MCF 10A (cell line): ENCODE measurements at regions of chr5 and their contacts with region 1.

Region 1: DNA sequence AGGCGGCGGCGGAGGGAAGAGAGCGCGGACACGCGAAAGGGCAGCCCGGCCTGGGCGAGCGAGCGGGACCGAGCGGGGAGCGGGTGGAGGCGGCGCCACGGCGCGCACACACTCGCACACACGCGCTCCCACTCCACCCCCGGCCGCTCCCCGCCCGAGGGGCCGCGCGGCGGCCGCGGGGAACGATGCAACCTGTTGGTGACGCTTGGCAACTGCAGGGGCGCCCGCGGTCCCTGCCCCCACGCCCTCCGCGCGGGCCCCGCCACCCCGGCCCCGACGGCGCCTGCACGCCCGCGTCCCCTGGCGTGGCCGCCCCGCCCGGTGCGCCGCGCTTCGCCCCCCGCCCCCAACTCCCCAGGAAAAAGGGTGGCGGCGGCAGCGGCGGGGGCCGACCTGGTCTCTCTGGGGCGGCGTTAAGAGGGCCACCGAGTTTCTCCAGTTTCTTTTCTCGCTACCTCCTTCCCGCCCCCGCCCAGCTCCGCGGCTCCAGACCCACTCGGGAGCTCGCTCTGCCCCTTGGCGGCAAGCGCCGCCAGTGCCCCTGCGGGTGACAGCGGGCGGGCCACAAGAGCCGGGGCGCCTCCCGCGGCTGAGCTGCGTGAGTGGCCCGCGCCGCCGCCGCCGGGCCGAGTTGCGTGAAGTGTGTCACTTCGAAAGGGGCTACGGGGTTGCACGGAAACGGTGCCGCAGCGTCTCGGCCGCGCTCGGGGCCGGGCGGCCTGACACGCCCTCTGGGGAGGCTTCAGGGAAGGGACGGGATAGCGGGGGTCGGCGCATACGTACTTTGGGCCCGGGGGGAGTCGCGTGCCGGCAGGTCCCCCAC is at the start of gene NR3C1:
- DNase-seq: peak; percentile 86
- H3K4me3 Mint-ChIP-seq: peak within 1 kb of the TSS; percentile 98
- H3K27ac Mint-ChIP-seq: peak within 1 kb of the TSS; percentile 99
- H3K4me1 Mint-ChIP-seq: peaks cover 29% of the 10 kb centered on the region
- H3K27me3 Mint-ChIP-seq: no peaks in the 10 kb centered on the region
- CTCF ChIP-seq: peak; percentile 59
- total RNA-seq, gene NR3C1: 92.9 and 113 TPM in 2 replicates

Region 2: DNA sequence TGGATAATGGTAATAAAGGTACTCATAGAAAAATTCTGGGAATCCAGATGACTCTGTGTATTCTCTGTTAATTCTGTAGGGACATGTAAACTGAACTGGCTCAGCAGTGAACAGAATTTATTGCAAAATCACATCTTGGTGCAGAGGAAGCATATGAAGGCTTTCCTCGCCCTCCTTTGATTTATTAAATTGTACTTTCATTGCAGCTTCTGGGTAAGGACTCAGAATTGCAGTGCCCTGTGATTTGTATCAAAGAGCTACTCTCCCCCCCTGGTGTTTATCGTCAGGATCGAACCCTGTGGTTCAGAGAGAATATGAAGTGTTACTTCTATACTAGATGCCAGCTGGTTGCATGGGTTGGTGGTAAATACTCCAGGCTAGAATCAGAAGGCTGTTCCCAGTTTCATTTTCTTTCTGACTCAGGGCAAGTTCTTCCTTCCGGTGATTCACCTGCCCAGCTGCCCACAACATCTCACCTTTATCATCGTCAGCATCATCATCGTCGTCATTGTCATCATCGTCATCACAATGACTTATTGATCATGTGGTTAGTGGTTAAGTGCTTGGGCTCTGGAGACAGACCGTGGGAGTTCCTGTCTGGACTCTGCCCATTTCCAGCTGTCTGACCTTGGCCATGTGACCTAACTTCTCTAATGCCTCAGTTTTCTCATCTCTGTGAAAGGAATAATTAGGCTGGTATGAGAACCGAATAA is 394.8 kb before region 1 on chr5:
- CTCF ChIA-PET with region 1: interaction called, 17 read pairs
- POLR2A ChIA-PET with region 1: interaction called, 41 read pairs
- intact Hi-C with region 1: no loop called
- DNase-seq: peak; percentile 95
- H3K4me3 Mint-ChIP-seq: peak overlapping the region; percentile 43
- H3K27ac Mint-ChIP-seq: peak overlapping the region; percentile 75
- H3K4me1 Mint-ChIP-seq: peaks cover 24% of the 10 kb centered on the region
- H3K27me3 Mint-ChIP-seq: no peaks in the 10 kb centered on the region
- CTCF ChIP-seq: peak; percentile 14

Region 3: GRCh38 chr5:143142596-143143435 is 261.0 kb before region 1 on chr5:
- CTCF ChIA-PET with region 1: interaction called, 4 read pairs
- POLR2A ChIA-PET with region 1: interaction called, 73 read pairs
- intact Hi-C with region 1: no loop called
- DNase-seq: peak; percentile 97
- H3K4me3 Mint-ChIP-seq: peak overlapping the region; percentile 33
- H3K27ac Mint-ChIP-seq: peak overlapping the region; percentile 91
- H3K4me1 Mint-ChIP-seq: peaks cover 54% of the 10 kb centered on the region
- H3K27me3 Mint-ChIP-seq: no peaks in the 10 kb centered on the region
- CTCF ChIP-seq: no peak

Region 4: GRCh38 chr5:143244000-143244736 is 159.6 kb before region 1 on chr5:
- CTCF ChIA-PET with region 1: interaction called, 4 read pairs
- POLR2A ChIA-PET with region 1: interaction called, 94 read pairs
- intact Hi-C with region 1: loop called (anchors 1 kb)
- DNase-seq: peak; percentile 98
- H3K4me3 Mint-ChIP-seq: peak overlapping the region; percentile 54
- H3K27ac Mint-ChIP-seq: peak overlapping the region; percentile 84
- H3K4me1 Mint-ChIP-seq: peaks cover 61% of the 10 kb centered on the region
- H3K27me3 Mint-ChIP-seq: no peaks in the 10 kb centered on the region
- CTCF ChIP-seq: no peak

Region 5: GRCh38 chr5:143413958-143414669 is 10.3 kb after region 1 on chr5:
- CTCF ChIA-PET with region 1: no interaction called
- POLR2A ChIA-PET with region 1: interaction called, 13 read pairs
- intact Hi-C with region 1: no loop called
- DNase-seq: no peak
- H3K4me3 Mint-ChIP-seq: no peak overlapping the region
- H3K27ac Mint-ChIP-seq: no peak overlapping the region
- H3K4me1 Mint-ChIP-seq: peaks cover 10% of the 10 kb centered on the region
- H3K27me3 Mint-ChIP-seq: no peaks in the 10 kb centered on the region
- CTCF ChIP-seq: no peak

Region 6: DNA sequence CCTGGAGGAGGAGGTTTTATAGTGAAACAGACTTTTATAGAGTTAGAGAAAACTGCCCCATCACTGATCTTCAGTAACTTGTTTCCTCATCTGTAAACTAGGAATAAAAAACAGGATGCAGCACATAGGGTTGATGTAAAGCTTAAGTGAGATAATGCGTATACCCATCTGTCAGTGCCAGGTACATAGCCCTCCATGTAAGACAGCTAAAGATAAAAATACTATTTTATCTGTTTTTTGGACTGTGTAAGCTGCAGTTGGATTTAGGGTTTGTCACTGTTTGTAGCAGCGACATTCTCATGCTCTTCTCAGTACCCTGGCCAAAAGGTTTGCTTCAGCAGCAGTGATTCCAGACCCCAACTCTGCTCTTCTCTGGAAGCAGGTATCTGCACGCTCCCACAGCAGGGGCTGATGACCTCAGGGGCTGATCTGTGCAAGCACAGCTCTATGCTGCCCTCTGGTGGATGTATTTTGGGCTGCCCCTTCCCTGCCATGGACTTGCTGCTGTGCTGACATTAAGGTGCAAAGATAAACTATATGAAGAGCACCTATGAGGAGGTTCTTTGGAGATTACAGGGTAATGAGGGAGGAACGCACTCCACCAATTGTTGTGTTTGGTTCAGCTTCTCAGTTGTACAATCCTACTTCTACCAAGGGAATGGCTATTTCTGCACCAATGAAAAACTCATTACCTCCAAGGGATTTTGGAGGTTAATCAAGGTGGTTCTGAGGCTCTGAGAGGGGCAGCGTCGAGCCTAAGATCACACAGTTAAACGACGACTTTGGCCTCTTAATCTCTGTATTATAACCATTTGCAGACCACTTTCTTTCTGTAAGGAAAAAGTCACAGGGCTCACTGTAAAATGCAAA is 421.3 kb after region 1 on chr5:
- CTCF ChIA-PET with region 1: interaction called, 19 read pairs
- POLR2A ChIA-PET with region 1: interaction called, 28 read pairs
- intact Hi-C with region 1: loop called (anchors 1 kb)
- DNase-seq: peak; percentile 84
- H3K4me3 Mint-ChIP-seq: no peak overlapping the region
- H3K27ac Mint-ChIP-seq: no peak overlapping the region
- H3K4me1 Mint-ChIP-seq: peaks cover 6% of the 10 kb centered on the region
- H3K27me3 Mint-ChIP-seq: no peaks in the 10 kb centered on the region
- CTCF ChIP-seq: peak; percentile 99

Region 7: DNA sequence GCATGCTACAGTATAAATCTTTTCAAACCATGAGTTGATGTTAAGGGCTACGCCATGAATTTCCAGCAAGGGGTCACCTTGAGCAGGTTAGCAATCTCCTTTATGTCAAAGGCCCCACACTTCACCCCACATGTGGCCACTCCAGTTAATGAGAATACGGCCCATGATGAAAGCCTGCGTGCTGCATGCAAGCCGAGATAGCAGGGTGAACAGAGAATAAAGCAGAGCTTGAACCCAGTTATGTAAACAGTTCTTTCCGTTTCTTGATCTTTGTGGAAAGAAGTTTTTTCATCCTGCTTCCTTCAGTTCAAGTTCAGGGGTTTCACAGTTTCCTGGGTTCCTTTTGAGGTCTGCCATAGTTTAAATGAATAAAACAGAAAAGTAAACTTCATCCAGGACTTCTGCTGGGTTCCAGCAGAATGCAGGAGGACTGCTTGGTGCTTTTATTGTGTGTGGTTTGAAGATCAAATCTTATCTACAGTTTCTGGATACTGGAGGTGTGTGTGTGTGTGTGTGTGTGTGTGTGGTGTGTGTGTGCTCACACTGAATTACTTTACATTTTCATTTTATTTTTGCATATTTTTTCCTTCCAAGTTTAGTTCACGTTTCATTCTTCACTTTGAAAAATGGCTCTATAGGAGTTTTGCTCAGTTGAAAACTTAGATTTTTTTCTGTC is 495.2 kb after region 1 on chr5:
- CTCF ChIA-PET with region 1: no interaction called
- POLR2A ChIA-PET with region 1: no interaction called
- intact Hi-C with region 1: no loop called
- DNase-seq: no peak
- H3K4me3 Mint-ChIP-seq: no peak overlapping the region
- H3K27ac Mint-ChIP-seq: no peak overlapping the region
- H3K4me1 Mint-ChIP-seq: no peaks in the 10 kb centered on the region
- H3K27me3 Mint-ChIP-seq: no peaks in the 10 kb centered on the region
- CTCF ChIP-seq: no peak